ENCODE measurements at regions of chr12 and their contacts with region 1.

Region 1: GRCh38 chr12:76621582-76622024 is 62.0 kb upstream of the OSBPL8 start:
- DNase-seq: peak; percentile 83
- H3K4me3 Mint-ChIP-seq: no peak overlapping the region
- H3K27ac Mint-ChIP-seq: no peak overlapping the region
- H3K4me1 Mint-ChIP-seq: peaks cover 4% of the 10 kb centered on the region
- H3K27me3 Mint-ChIP-seq: no peaks in the 10 kb centered on the region

Region 2: DNA sequence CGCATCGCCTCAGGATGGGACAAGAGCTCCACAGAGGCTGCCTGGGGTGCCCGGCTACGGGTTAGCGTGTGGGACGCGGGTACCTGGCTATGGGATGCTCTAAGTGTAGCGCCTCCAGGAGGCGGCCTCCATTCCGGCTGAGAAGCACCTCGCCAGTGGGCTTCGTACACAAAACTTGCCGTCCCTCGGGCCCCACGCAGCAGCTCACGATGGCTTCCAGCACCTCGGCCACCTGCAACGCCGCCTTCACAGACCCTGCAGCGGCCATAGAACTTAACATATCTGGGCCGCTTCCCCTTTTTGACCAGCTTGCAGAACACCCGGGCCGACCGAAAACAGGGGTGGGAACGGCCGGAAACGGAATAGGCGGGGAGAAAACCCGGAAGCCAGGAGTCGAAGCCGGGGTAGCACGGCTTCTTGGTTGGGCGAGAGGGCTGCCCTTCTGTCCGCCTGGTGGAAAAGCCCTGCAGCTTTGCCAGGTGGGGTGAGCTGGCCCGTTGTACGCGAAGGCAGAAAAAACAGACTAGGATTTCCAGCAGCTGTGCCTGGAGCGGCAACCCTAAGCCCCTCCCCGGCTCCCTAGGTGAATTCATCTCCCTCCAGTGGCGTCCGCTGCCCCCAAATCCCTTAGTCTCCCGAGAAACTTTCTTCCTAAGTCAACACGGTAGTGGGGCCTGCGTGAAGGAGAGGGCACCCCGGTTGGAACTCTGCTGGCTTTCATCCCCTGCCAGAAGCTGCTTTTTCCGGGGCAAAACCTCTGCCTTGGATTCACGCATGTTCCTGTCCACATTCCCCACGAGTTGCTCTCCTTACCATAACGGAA is 273.3 kb before region 1 on chr12 and contains the start of gene BBS10:
- CTCF ChIA-PET with region 1: no interaction called
- intact Hi-C with region 1: no loop called
- DNase-seq: peak; percentile 92
- H3K4me3 Mint-ChIP-seq: peak within 1 kb of the TSS; percentile 90
- H3K27ac Mint-ChIP-seq: peak within 1 kb of the TSS; percentile 86
- H3K4me1 Mint-ChIP-seq: peaks cover 22% of the 10 kb centered on the region
- H3K27me3 Mint-ChIP-seq: no peaks in the 10 kb centered on the region
- total RNA-seq, gene BBS10: 3.3 TPM

Region 3: GRCh38 chr12:76480796-76481195 is 140.8 kb before region 1 on chr12:
- CTCF ChIA-PET with region 1: no interaction called
- intact Hi-C with region 1: no loop called
- DNase-seq: no peak
- H3K4me3 Mint-ChIP-seq: no peak overlapping the region
- H3K27ac Mint-ChIP-seq: no peak overlapping the region
- H3K4me1 Mint-ChIP-seq: peaks cover 9% of the 10 kb centered on the region
- H3K27me3 Mint-ChIP-seq: no peaks in the 10 kb centered on the region

Region 4: DNA sequence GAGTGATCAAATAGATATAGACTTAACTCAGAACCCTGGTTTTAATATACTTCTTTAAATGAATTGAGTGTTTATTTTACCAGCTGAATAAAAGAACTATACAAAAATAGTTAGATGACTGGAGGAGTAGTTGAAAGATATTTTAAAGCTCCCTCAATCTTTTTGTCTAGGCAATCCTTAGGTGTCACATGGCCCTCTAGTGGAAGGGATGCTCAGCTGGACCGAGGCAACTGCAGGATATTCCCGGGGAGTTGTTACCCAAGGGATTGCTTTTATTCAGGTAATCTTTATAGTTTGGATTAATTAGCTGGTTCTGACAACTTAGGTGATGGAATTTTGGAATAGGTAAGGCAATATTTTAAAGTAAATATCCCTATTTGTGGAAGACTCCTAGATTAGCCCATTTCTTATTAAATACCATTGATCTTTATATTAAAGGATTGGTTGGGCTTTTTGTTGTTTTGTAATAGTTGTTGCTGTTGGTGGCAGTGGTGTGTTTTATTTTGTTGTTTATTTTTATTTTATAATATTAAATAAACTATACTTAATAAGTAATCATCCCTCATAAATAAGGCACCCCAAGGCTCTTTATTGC is 199.4 kb after region 1 on chr12:
- CTCF ChIA-PET with region 1: interaction called, 3 read pairs
- intact Hi-C with region 1: loop called (anchors 1 kb)
- DNase-seq: peak; percentile 18
- H3K4me3 Mint-ChIP-seq: no peak overlapping the region
- H3K27ac Mint-ChIP-seq: no peak overlapping the region
- H3K4me1 Mint-ChIP-seq: no peaks in the 10 kb centered on the region
- H3K27me3 Mint-ChIP-seq: no peaks in the 10 kb centered on the region

Region 5: DNA sequence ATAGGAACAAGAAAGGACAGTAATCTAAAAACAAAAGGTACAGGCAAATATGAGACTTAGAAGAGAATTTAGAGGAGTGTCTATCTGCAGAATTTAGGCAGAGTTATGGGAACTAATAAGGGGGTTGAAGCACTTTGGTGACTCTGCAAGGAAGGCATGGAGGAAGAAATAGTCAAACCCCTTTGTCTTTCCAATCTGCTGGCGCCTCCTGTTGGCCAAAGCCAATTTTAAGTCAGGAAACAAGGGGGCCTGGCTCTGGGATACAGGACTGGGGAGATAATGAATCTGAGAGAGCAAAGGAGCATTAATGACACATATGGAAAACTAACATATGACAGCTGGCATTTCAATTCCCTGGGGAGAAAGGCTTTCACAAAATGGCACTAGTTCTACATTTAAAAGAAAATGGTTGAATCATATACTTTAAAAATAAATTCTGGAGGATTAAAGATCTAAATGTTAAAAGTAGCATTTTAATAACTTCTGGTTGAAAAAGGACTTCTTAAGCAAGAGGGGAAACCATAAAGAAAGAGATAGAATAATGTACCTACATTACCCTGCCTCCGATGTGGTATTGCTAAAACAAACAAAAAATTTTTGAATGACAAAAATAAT is 305.7 kb after region 1 on chr12:
- CTCF ChIA-PET with region 1: interaction called, 3 read pairs
- intact Hi-C with region 1: loop called (anchors 1 kb)
- DNase-seq: peak; percentile 70
- H3K4me3 Mint-ChIP-seq: no peak overlapping the region
- H3K27ac Mint-ChIP-seq: no peak overlapping the region
- H3K4me1 Mint-ChIP-seq: no peaks in the 10 kb centered on the region
- H3K27me3 Mint-ChIP-seq: peaks cover 6% of the 10 kb centered on the region

Region 6: DNA sequence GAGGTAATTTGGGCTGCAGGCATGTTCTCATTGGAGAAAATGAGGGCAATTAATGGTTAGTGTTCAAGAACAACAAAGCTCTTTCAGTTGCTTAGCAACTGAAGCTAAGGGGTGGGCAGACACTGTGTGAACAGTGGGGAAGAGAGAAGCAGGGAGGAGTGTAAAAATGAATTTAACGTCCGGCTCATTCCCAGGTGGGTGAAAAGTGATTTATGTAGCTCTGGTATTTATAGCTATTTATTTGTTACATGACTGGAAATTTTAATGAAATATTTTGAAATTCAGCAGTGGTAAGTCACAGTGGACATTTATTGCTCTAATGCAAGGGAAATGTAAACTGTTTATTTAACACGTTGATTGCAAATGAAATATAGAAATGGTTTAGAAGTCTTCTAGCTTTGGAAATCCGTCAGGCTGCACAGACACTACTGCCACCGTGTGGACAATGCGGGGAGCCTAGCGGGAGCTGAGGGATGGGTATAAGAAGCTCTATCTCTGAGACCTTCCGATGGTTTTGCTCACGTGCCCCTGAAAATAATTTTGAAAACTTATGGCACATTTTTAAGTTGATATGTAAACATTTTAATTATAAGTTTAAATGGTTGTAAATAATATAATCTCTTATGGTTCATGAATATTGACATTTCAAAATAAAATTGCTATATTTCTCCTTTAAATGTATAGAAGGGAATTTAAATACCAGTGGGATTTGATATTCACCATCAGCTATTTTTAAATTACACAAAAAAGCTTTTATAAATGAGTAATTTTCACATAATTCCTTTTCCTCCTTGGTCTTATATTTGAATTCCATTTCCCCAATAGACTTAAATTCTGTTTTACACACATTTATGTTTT is 389.3 kb after region 1 on chr12:
- CTCF ChIA-PET with region 1: interaction called, 15 read pairs
- intact Hi-C with region 1: loop called (anchors 1 kb)
- DNase-seq: peak; percentile 84
- H3K4me3 Mint-ChIP-seq: no peak overlapping the region
- H3K27ac Mint-ChIP-seq: no peak overlapping the region
- H3K4me1 Mint-ChIP-seq: peaks cover 5% of the 10 kb centered on the region
- H3K27me3 Mint-ChIP-seq: peaks cover 16% of the 10 kb centered on the region

Measured in activated naive CD4-positive, alpha-beta T cell treated with anti-CD3 and anti-CD28 coated beads for 36 hours (primary cell).